ENCODE measurements at regions of chr6 and their contacts with region 1.

Region 1: DNA sequence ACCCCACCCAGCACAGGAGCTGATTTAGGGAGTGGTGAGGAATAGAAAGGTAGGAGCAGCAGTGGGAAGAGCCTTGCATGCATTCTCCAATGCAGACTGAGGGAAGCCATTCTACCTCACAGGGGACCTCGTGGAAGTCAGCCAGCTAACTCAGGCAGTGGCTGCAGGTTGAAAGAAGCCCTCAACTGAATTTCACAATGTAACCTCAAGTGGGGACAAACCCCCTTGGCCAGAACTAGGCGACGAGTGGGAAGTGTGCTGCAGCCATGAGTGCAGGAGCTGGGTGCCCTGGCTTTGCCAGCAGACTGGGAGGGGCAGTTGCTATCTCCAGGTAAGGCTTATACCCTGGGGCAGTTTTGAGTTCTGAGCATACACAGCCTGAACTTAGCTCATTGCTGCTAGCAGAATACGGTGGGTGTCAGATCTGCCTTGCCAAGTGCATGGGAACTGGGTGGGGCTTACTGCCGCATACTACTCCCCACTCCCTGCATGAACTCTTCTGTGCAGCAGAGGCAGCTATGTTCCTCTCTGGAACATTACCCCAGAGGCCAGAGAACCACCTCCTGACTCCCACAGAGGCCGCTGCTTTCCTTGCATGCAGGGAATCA is 126.5 kb downstream of the CDK19 start:
- DNase-seq: no peak
- H3K4me3 ChIP-seq: no peak overlapping the region
- H3K27ac ChIP-seq: no peak overlapping the region
- H3K4me1 ChIP-seq: peaks cover 3% of the 10 kb centered on the region
- H3K27me3 ChIP-seq: no peaks in the 10 kb centered on the region
- CTCF ChIP-seq: no peak

Region 2: DNA sequence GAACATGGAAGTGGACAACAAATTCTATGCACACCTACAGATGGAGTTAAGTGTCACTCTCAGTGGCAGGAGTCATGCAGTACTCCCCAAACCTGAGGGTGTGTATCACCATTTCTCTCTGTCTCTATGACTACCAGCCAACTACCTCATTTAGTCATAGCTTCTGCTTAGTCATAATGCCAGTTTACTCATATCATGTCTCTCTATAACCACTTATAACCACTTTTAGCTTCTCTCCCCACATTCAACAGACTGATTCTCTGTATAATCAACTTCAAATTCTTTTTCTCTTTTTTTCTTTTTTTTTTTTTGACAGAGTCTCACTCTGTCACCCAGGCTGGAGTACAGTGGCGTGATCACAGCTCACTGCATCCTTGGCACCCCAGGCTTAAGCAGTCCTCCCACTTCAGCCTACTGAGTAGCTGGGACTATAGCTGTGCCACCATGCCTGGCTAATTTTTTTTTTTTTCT is 256.0 kb after region 1 on chr6:
- intact Hi-C with region 1: loop called (anchors 5 kb)
- DNase-seq: no peak
- H3K4me3 ChIP-seq: no peak overlapping the region
- H3K27ac ChIP-seq: no peak overlapping the region
- H3K4me1 ChIP-seq: no peaks in the 10 kb centered on the region
- H3K27me3 ChIP-seq: no peaks in the 10 kb centered on the region
- CTCF ChIP-seq: no peak

Measured in left ventricle myocardium inferior (tissue), 1 donor.